MCF 10A (cell line): ENCODE measurements at regions of chr1 and their contacts with region 1.

Region 1: DNA sequence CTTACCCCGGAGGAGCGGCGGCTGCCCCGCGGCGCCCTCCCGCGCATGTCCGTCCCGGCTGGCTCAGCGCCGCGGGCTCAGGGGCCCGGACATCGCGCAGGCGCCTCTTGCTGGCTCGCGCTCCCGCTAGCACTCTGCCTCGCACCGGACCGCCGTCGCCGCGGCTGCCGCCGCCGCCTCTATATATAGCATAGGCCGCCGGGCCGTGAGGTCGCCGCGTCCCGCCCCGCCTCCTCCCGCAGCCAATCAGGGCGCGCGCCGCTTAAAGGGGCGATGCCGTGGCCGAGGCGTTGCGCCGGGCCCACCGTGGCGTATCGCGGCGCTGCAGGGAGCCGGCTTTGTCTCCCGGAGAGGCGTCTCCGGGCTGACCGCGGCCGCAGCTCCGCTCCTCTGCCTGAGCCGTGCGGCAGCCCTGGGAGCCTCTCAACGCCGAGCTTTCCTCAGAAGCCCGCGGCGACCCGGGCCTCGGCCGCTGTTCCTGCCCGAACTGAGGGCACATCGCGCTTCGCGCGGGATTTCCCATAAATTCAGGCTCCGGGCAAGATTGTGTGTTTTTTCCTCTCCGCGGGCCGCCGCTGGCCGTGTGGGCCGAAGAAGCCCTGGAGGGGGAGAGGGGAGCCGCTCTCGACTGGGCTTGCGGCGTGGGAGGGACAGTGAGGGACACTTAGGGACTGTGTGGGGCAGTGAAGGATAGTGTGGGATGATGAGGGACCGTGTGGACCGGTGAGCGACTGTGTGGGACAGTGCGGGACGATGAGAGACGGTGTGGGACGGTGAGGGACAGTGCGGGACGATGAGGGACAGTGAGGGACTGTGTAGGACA is at the start of gene ERRFI1:
- DNase-seq: peak; percentile 93
- H3K4me3 Mint-ChIP-seq: peak within 1 kb of the TSS; percentile 88
- H3K27ac Mint-ChIP-seq: peak within 1 kb of the TSS; percentile 93
- H3K4me1 Mint-ChIP-seq: peaks cover 39% of the 10 kb centered on the region
- H3K27me3 Mint-ChIP-seq: no peaks in the 10 kb centered on the region
- CTCF ChIP-seq: no peak
- total RNA-seq, gene ERRFI1: 86.4 and 111 TPM in 2 replicates

Region 2: GRCh38 chr1:7869136-7869905 is 157.0 kb before region 1 on chr1:
- CTCF ChIA-PET with region 1: no interaction called
- POLR2A ChIA-PET with region 1: no interaction called
- intact Hi-C with region 1: no loop called
- DNase-seq: no peak
- H3K4me3 Mint-ChIP-seq: no peak overlapping the region
- H3K27ac Mint-ChIP-seq: no peak overlapping the region
- H3K4me1 Mint-ChIP-seq: no peaks in the 10 kb centered on the region
- H3K27me3 Mint-ChIP-seq: no peaks in the 10 kb centered on the region
- CTCF ChIP-seq: no peak

Region 3: DNA sequence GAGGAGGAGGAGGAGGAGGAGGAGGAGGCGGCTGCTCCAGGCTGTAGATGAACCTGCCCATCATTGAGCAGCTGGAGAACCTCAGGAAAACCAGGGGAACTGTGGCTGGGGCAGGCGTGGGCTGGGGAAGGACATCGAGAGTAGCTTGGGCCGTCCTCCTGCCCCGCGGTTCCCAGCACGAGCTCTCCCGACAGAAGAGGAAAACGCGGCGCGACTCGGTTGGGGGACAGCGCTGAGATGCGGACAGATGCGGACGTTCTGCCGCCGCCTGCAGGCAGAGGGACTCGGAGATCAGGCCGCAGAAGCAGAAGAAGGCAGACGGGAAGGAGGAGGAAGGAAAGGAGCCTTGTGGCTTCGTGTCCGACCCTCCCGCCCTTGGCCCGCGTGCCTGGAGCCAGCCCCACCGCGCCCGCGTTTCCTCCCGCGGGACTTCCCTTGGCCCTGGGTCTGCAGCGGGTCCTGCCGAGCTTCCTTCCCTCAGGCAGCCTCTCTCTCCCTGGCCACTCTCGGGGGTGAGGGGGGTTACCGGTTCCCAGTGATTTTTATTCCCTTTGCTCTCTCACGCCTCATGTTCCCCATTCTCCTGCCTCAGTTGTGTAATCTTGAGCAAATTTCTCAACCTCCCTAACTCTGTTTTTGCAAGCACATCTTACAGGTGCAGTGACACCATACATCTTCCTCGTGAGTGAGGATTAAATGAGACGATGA is 84.0 kb before region 1 on chr1:
- CTCF ChIA-PET with region 1: no interaction called
- POLR2A ChIA-PET with region 1: no interaction called
- intact Hi-C with region 1: no loop called
- DNase-seq: no peak
- H3K4me3 Mint-ChIP-seq: no peak overlapping the region
- H3K27ac Mint-ChIP-seq: no peak overlapping the region
- H3K4me1 Mint-ChIP-seq: peaks cover 30% of the 10 kb centered on the region
- H3K27me3 Mint-ChIP-seq: peaks cover 30% of the 10 kb centered on the region
- CTCF ChIP-seq: no peak

Region 4: GRCh38 chr1:7961216-7962015 is 64.9 kb before region 1 on chr1 and contains the start of gene PARK7:
- CTCF ChIA-PET with region 1: no interaction called
- POLR2A ChIA-PET with region 1: interaction called, 12 read pairs
- intact Hi-C with region 1: no loop called
- DNase-seq: peak; percentile 99
- H3K4me3 Mint-ChIP-seq: peak within 1 kb of the TSS; percentile 84
- H3K27ac Mint-ChIP-seq: peak within 1 kb of the TSS; percentile 30
- H3K4me1 Mint-ChIP-seq: peaks cover 11% of the 10 kb centered on the region
- H3K27me3 Mint-ChIP-seq: no peaks in the 10 kb centered on the region
- CTCF ChIP-seq: peak; percentile 19
- total RNA-seq, gene PARK7: 419 and 450 TPM in 2 replicates

Region 5: DNA sequence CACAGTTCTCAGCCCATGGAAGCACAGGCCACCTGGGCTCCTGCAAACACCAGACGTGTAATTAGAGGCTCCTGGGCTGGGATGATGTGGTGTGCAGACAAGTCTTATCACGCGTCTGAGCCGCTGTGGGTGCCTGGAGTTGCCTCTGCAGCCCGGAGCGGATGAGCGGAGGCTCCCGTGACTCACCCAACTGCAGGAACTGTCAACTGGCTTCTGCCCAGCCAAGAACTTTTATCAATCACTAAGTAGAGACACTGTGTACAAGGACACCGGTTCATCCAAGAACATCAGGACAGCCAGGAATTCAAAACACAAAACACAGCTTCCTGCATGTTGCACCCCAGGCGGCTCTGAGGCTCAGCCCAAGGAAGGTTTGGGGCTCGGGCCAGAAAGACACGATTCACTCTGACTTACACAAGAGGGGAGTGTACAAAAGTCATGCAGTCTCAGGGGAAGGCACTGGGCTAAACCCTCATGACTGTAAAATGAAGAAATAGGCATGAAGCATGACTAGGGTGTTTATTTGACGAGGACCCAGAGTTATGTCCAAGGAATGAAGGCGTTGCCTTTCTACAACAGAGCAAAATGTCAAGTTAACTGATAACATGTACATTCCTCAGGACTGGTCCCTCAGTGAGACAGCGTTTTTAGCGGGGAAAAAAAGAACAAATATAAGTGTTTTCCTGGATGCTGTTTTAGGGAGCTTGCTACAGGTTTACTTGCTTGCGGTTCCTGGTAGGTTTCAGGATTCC is 21.4 kb before region 1 on chr1:
- CTCF ChIA-PET with region 1: no interaction called
- POLR2A ChIA-PET with region 1: interaction called, 256 read pairs
- intact Hi-C with region 1: no loop called
- DNase-seq: peak; percentile 99
- H3K4me3 Mint-ChIP-seq: peak overlapping the region; percentile 57
- H3K27ac Mint-ChIP-seq: peak overlapping the region; percentile 84
- H3K4me1 Mint-ChIP-seq: peaks cover 38% of the 10 kb centered on the region
- H3K27me3 Mint-ChIP-seq: no peaks in the 10 kb centered on the region
- CTCF ChIP-seq: no peak

Region 6: DNA sequence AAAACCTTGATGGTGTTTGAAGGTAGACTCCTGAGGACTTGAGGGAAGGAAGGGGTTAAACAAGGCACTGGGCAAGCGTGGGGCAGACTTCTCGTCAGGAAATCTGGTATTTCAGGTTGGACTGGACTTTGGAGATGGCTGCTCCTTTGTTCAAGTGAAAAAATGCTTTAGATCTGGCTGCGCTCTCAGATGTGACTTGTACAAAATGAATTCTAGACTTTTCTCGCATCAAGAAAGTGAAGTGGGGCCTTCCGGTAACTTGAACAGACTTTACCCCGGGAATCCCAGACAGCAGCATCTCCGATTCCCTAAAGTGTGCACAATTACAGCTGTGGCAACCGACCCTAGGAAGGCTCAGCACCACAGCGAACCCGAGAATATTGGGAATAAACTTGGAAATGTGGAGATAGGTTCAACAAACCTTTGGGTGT is 44.0 kb after region 1 on chr1:
- CTCF ChIA-PET with region 1: no interaction called
- POLR2A ChIA-PET with region 1: interaction called, 103 read pairs
- intact Hi-C with region 1: no loop called
- DNase-seq: no peak
- H3K4me3 Mint-ChIP-seq: no peak overlapping the region
- H3K27ac Mint-ChIP-seq: peak overlapping the region; percentile 97
- H3K4me1 Mint-ChIP-seq: peaks cover 31% of the 10 kb centered on the region
- H3K27me3 Mint-ChIP-seq: no peaks in the 10 kb centered on the region
- CTCF ChIP-seq: no peak

Region 7: DNA sequence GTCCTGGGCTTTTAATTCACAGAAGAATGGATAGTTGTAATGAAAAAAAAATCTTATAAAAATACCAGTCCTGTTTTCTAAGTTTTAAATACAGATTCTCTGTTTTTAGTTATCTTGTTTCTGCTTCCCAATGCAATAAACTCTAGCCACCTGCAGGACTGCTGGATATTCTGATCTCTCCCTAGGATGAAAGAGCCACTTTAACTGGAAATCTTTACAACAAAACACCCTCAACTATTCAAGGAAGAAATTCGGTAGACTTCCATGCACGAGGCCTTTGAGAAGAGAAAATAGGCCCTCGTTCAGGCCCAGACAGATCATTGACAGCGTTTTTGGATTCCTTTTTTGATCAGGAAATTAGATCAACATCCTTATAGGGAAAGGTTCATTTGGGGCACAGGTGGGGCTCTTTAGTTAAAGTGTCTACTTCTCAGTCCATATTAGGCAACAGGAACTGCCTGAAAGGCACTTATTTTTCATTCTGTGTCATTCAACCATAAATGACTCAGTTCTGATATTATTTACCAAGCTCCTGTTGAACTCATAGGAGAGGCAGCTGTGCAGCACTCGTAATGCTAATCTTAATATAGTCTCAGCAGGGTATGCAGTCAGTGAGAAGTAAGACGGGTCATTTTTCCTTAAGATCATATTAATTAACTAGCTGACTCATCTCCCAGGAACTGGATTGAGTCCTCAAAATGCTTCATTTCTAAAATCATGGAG is 70.9 kb after region 1 on chr1:
- CTCF ChIA-PET with region 1: no interaction called
- POLR2A ChIA-PET with region 1: interaction called, 16 read pairs
- intact Hi-C with region 1: loop called (anchors 5 kb)
- DNase-seq: peak; percentile 85
- H3K4me3 Mint-ChIP-seq: peak overlapping the region; percentile 19
- H3K27ac Mint-ChIP-seq: peak overlapping the region; percentile 96
- H3K4me1 Mint-ChIP-seq: peaks cover 55% of the 10 kb centered on the region
- H3K27me3 Mint-ChIP-seq: no peaks in the 10 kb centered on the region
- CTCF ChIP-seq: no peak

Region 8: GRCh38 chr1:8211589-8212442 is 185.5 kb after region 1 on chr1:
- CTCF ChIA-PET with region 1: no interaction called
- POLR2A ChIA-PET with region 1: interaction called, 12 read pairs
- intact Hi-C with region 1: no loop called
- DNase-seq: peak; percentile 99
- H3K4me3 Mint-ChIP-seq: peak overlapping the region; percentile 51
- H3K27ac Mint-ChIP-seq: peak overlapping the region; percentile 85
- H3K4me1 Mint-ChIP-seq: peaks cover 26% of the 10 kb centered on the region
- H3K27me3 Mint-ChIP-seq: no peaks in the 10 kb centered on the region
- CTCF ChIP-seq: no peak

Region 9: DNA sequence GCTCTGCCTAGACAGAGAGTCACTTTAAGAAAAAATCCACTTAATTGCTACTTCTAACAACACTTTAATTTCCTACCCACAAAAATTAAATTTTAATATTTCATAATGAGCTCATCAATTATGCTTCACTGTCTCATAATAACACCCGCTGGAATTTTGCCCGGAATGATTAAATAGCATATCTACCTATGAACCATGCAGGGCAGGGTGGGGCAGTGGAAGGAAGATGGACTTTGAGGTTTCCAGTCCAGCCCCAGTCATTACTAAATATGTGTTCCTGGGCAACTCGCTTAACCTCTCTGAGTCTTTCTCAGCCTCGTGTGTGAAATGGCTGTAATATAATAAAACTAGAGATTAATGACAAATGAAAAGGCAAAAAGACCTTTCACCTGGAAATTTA is 258.7 kb after region 1 on chr1:
- CTCF ChIA-PET with region 1: no interaction called
- POLR2A ChIA-PET with region 1: no interaction called
- intact Hi-C with region 1: no loop called
- DNase-seq: peak; percentile 37
- H3K4me3 Mint-ChIP-seq: no peak overlapping the region
- H3K27ac Mint-ChIP-seq: peak overlapping the region; percentile 42
- H3K4me1 Mint-ChIP-seq: peaks cover 4% of the 10 kb centered on the region
- H3K27me3 Mint-ChIP-seq: peaks cover 18% of the 10 kb centered on the region
- CTCF ChIP-seq: no peak

Region 10: DNA sequence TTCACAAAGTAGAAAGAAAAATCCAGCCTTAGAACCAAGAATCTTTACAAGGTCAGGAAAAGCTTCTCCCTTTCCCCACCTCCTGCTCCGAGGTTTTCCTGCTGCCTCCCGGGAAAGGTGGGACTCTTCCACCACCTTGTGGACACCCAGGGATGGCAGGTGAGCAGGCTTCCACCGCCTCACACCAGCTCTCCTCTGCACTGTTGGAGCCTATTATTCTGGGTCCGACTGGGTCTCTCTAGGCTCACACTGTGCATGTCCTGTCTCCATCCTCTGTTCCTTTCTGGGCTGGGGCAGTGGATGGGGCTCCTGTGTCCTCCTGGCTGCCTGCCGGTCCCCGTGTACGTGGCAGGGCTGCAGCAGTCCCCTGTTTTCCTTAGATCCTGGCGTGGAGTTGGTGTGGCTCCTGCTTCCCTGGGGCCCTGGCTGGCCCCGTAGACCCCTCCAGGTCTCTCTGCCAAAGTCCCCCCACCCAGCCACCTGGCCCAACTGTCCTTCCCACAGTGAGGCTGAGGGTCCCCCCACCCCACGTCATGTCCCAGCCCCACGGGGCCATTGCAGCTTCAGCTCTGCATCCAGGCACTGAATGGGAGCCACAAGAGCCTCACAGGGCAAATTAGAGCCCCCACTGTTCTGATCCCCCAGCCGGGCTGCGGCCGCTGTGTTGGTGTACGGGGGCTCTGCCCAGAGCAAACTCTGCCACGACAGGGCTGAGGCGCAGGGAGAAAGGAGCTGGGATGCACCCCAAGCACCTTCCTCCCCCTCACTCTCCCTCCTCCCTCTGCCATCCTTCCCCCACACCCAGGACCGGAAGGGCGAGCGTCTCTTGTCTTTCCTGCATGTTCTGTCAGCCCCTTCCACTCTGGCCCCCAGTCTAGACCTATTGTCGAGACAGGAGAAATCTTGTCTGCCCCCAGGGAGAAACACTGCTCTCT is 288.2 kb after region 1 on chr1:
- CTCF ChIA-PET with region 1: interaction called, 44 read pairs
- POLR2A ChIA-PET with region 1: interaction called, 5 read pairs
- intact Hi-C with region 1: loop called (anchors 1 kb)
- DNase-seq: peak; percentile 85
- H3K4me3 Mint-ChIP-seq: no peak overlapping the region
- H3K27ac Mint-ChIP-seq: no peak overlapping the region
- H3K4me1 Mint-ChIP-seq: peaks cover 15% of the 10 kb centered on the region
- H3K27me3 Mint-ChIP-seq: no peaks in the 10 kb centered on the region
- CTCF ChIP-seq: peak; percentile 95

Region 11: GRCh38 chr1:8698012-8698630 is 671.8 kb after region 1 on chr1:
- CTCF ChIA-PET with region 1: no interaction called
- POLR2A ChIA-PET with region 1: no interaction called
- intact Hi-C with region 1: no loop called
- DNase-seq: no peak
- H3K4me3 Mint-ChIP-seq: no peak overlapping the region
- H3K27ac Mint-ChIP-seq: peak overlapping the region; percentile 62
- H3K4me1 Mint-ChIP-seq: peaks cover 24% of the 10 kb centered on the region
- H3K27me3 Mint-ChIP-seq: no peaks in the 10 kb centered on the region
- CTCF ChIP-seq: no peak